Dorsolateral prefrontal cortex (tissue), 120 donors: ENCODE measurements at regions of chr10 and their contacts with region 1.

Region 1: GRCh38 chr10:73644015-73644743 is 2.9 kb upstream of the MYOZ1 start:
- DNase-seq: peak in 8 of 10 donors; percentile 41 to 70 (median 64)
- H3K4me3 ChIP-seq: peak overlapping the region in 8 of 59 donors; percentile 4 to 40 (median 20)
- H3K27ac ChIP-seq: peak overlapping the region in 5 of 59 donors; percentile 2 to 73 (median 28)
- H3K27me3 ChIP-seq: no peaks in the 10 kb centered on the region
- CTCF ChIP-seq: peak; percentile 86 to 99 (median 94)

Region 2: DNA sequence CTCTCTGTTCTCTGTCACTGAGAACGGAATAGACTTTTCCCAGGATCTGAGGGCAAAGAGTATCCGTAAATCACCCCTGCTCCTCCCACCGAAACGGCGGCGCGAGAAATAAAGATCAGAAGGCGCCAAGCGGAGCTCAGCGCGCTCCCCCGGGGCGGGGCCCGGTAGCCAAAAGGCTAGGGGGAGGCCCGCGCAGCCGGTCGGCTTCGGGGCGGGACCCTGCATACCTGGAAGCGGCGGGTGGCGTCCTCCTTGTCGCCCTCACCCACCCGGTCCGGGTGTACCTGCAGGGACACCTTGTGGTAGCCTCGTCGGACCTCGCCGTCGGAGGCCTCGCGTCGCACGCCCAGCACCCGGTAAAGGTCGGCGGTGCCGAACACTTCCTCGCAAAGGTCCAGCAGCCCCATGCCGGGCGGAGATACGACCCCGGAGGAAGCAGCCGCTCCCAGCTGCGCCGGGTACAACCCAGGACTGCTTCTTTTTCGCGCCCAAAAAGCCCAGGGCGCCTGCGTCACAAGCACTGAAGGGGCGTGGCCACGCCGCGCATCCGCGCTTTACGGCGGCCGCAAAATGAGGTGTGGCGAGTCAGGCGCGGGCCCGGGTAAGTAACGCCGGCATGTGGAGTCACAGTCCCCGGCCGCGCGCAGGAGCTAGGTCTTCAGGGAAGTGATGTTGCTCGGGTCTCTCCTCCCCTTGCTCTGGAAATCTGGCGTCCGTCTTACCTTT is 397.2 kb before region 1 on chr10 and contains the start of gene DNAJC9:
- intact Hi-C with region 1: loop called in 1 of 2 experiments (anchors 5 kb)
- DNase-seq: peak; percentile 93 to 97 (median 96)
- H3K4me3 ChIP-seq: peak within 1 kb of the TSS; percentile 72 to 100 (median 94)
- H3K27ac ChIP-seq: peak within 1 kb of the TSS in 55 of 59 donors; percentile 1 to 89 (median 65)
- H3K27me3 ChIP-seq: no peaks in the 10 kb centered on the region
- CTCF ChIP-seq: peak in 34 of 56 donors; percentile 11 to 57 (median 30)
- total RNA-seq, gene DNAJC9: 17.3 to 49.8 (median 28.6) TPM

Region 3: DNA sequence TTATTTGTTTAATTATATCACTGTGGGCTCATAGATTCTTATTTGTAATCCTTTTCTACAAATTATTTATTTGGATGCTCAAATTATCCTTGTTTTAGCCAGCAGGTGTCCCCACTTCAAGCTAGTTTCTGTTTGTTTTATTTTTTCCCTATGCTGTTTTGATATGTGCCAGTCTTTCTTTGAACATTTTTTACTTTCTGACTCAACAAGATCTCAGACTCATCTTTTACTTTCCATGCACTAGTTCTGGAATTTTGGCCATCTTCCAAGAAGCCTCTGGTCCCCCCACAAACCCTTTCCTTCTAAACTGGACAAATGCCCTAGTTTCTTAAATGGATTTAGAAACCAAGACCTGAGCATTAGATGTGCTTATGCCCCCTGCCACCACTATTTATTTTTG is 380.2 kb before region 1 on chr10:
- intact Hi-C with region 1: loop called in 1 of 2 experiments (anchors 5 kb)
- DNase-seq: no peak
- H3K4me3 ChIP-seq: no peak overlapping the region
- H3K27ac ChIP-seq: no peak overlapping the region
- H3K27me3 ChIP-seq: no peaks in the 10 kb centered on the region
- CTCF ChIP-seq: peak; percentile 25 to 70 (median 57)

Region 4: DNA sequence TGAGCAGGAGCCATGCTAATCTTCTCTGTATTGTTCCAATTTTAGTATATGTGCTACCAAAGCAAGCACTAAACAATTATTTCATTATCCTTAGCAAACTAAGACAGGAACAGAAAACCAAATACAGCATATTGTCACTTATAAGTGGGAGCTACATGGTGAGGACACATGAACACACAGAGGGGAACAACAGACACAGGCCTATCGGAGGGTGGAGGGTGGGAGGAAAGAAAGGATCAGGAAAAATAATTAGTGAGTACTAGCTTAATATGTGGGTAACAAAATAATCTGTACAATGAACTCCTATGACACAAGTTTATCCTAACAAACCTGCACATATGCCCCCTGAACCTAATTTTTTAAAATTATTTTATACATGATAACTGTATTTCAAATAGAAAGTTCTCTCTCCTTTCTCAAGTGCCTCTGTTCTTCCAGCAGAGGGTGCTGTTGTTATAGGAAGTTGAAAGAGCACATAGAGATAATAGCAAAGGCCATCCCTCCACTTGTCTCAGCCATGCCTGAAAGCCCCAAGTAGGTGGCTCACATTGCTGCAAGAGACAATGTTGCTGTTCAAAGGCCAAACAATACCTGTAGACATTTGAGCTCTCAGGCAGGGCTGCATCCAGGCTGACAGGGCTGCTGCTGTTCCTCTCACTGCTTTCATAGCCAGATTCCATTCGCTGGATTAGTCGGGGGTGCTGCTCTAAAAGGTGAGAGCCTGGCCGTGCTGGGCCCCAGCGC is 114.9 kb before region 1 on chr10:
- intact Hi-C with region 1: loop called (anchors 1 kb)
- DNase-seq: peak in 4 of 10 donors; percentile 27 to 53 (median 52)
- H3K4me3 ChIP-seq: no peak overlapping the region
- H3K27ac ChIP-seq: peak overlapping the region in 45 of 59 donors; percentile 9 to 81 (median 51)
- H3K27me3 ChIP-seq: no peaks in the 10 kb centered on the region
- CTCF ChIP-seq: peak; percentile 63 to 98 (median 90)

Region 5: DNA sequence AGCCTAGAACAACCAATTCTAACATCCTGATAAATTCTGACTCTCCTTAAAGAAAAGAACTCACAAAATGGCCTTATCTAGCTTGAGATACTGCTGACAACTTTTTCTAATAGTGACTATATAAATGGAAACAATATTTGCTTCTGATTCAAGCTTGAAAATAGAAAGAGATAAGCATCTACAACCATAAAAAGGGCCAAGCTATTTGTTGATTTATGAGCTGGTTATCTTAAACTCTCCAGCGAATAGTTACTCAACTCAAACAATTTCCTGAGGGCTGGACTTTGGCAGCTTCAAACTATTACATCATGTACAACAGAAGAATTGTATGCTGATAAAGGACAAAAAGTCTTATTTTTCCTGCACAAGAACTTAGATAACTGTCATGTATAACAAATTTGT is 57.6 kb before region 1 on chr10:
- intact Hi-C with region 1: loop called in 1 of 2 experiments (anchors 10 kb)
- DNase-seq: no peak
- H3K4me3 ChIP-seq: peak overlapping the region in 39 of 59 donors; percentile 1 to 69 (median 29)
- H3K27ac ChIP-seq: peak overlapping the region in 58 of 59 donors; percentile 47 to 99 (median 95)
- H3K27me3 ChIP-seq: no peaks in the 10 kb centered on the region
- CTCF ChIP-seq: no peak

Region 6: DNA sequence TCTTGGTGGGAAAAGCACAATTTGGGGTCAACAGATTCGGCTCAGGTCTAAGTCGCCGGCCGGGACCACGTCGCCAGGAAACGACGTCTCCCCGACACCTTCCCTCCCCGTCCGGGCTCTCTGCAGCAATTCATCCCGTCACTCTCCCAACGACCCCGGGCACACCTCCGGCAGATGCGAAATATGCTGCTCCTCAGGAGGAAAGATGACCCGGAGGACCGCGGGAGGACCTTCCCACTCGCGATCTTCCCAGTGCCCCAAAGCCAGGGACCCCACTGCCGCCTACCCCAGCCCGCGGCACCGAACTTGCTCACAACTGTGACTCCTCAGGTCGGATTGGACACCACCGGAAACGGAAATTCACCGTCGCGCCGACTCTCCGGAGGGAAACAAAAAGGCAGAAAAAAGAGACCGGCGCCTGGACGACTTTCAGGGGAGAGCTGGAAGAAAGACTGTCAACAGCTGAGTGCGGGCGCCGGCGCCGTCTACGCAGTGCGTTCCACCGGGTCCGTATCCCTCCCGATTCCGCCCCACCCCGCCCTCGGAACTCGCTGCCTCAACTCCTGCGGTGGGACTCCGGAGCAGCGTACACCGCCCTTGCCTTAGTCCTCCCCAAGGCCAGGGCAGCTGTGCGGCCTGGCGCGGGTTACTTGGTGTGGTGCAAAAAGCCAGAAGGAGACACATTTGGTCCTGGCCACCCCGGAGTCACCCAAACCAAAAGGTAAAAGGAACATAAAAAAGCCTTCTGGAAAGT is 86.2 kb after region 1 on chr10:
- intact Hi-C with region 1: loop called in 1 of 2 experiments (anchors 10 kb)
- DNase-seq: peak; percentile 84 to 95 (median 90)
- H3K4me3 ChIP-seq: peak overlapping the region; percentile 54 to 98 (median 83)
- H3K27ac ChIP-seq: peak overlapping the region; percentile 28 to 97 (median 85)
- H3K27me3 ChIP-seq: no peaks in the 10 kb centered on the region
- CTCF ChIP-seq: peak in 11 of 56 donors; percentile 10 to 33 (median 13)

Region 7: DNA sequence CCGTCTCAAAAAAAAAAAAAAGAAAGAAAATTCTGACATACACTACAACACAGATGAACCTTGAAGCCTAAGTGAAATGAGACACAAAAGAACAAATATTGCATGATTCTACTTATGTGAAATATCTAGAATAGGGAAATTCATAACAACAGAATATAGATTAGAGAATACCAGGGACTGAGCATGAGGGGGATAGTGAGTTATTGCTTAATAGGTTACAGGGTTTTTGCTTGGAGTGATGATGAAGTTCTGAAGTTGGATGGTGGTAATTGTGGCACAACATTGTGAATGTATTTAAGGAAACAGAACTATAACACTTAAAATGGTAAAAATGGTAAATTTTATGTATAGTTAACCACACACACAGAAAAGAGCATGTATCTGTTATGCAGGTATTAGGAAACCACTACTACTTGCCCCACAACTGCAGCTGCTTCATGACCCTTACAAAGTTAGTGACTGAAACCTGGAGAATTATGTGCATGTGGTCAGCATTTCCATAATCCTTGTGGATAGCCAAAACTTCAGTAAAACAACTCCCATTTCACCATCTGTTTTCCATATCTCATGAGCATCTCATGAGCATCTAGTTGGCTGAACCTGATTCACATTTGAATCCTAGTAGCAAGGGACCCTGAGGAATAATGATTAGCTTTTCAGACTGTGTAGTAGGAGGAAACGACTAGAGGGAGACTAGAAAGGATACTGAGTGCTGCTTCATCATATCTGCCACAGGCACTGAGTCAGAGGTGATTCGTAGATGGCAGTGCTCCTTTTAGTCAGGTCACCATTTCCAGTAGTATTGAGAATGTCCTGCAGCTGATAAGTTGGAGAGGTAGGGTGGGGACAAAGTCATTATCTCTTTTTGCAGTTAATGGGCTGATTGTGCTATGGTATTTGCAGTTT is 1493.6 kb after region 1 on chr10:
- intact Hi-C with region 1: no loop called
- DNase-seq: no peak
- H3K4me3 ChIP-seq: no peak overlapping the region
- H3K27ac ChIP-seq: no peak overlapping the region
- H3K27me3 ChIP-seq: no peaks in the 10 kb centered on the region
- CTCF ChIP-seq: no peak